ENCODE measurements at regions of chr10 and their contacts with region 1.

Region 1: DNA sequence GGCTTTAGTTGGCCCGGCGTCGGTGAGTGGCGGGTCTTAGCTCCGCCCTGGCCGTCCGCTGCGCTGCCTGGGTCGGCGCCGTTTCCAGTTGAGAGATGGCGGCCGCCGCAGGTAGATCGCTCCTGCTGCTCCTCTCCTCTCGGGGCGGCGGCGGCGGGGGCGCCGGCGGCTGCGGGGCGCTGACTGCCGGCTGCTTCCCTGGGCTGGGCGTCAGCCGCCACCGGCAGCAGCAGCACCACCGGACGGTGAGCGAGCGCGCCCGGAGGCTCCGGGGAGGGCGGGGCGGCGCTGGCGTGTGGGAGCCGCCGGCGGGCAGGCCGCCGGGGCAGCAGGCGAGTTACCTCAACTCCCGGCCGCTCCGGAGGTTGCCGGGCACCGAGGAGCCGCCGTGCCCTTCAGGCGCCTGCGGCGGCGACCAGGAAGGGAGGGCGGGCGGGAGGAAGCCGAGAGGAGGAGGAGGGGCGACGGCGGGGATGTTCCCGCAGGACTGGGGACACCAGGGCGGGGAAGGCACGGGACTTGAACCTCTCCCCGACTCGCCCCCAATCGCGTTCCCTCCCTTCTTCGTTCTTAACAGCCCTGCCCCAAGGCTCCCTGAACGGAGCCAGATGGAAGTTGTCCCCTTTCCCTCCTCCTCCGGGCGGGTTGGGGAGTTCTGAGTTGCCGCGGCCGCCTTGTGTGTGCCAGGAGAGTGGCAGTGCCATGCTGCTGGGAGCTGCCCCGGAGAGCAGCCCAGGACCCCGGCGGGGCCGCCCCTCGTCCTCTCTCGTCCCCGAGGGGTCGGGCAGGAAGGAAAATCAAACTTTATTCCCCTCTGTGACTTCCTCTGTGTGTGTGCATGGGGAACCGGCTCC is at the start of gene MCU:
- DNase-seq: peak; percentile 93 to 96
- ATAC-seq: peak; percentile 97 to 99 (median 98)
- H3K4me3 ChIP-seq: peak within 1 kb of the TSS; percentile 43 to 91 (median 84)
- H3K27ac ChIP-seq: peak within 1 kb of the TSS; percentile 83 to 99 (median 94)
- H3K4me1 ChIP-seq: peaks cover 0 to 39% (median 27%) of the 10 kb centered on the region in 9 donors
- H3K27me3 ChIP-seq: no peaks in the 10 kb centered on the region
- CTCF ChIP-seq: no peak
- total RNA-seq, gene MCU: 12.0 to 19.0 (median 15.2) TPM

Region 2: GRCh38 chr10:72625608-72626443 is 66.5 kb before region 1 on chr10 and contains the start of gene MICU1:
- intact Hi-C with region 1: loop called in 3 of 10 experiments (anchors 2 to 5 kb)
- DNase-seq: peak; percentile 92 to 97
- ATAC-seq: peak; percentile 100
- H3K4me3 ChIP-seq: peak within 1 kb of the TSS; percentile 66 to 95 (median 81)
- H3K27ac ChIP-seq: peak within 1 kb of the TSS; percentile 36 to 88 (median 84)
- H3K4me1 ChIP-seq: peaks cover 2 to 20% (median 11%) of the 10 kb centered on the region in 9 donors
- H3K27me3 ChIP-seq: no peaks in the 10 kb centered on the region
- CTCF ChIP-seq: no peak
- total RNA-seq, gene MICU1: 41.3 to 54.1 (median 45.9) TPM

Region 3: DNA sequence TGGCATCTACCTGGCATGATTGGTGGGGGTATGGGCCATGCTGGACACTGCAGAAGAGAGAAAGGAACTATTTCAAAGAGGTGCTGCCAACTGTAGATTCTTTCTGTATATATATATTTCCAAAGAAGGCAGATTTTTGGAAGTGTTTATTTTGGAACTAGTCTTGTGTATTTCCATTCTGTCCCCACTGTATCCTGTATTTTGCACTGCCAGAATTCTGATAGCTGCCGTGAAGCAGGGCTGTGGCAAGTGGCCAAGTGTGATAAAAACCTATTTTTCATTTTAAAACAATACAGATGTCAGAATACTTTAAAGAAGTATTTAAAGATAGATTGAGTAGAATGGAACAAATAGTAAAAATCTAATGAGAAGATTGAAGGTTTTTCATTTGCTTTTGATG is 16.8 kb after region 1 on chr10:
- intact Hi-C with region 1: no loop called
- DNase-seq: peak in 1 of 2 donors; percentile 60
- ATAC-seq: peak in 6 of 8 donors; percentile 43 to 73 (median 54)
- H3K4me3 ChIP-seq: no peak overlapping the region
- H3K27ac ChIP-seq: peak overlapping the region in 6 of 10 donors; percentile 10 to 77 (median 38)
- H3K4me1 ChIP-seq: peaks cover 0 to 53% (median 32%) of the 10 kb centered on the region in 9 donors
- H3K27me3 ChIP-seq: no peaks in the 10 kb centered on the region
- CTCF ChIP-seq: no peak

Region 4: GRCh38 chr10:72736176-72736827 is 44.0 kb after region 1 on chr10:
- intact Hi-C with region 1: loop called in 1 of 10 experiments (anchors 5 kb)
- DNase-seq: peak in 1 of 2 donors; percentile 16
- ATAC-seq: peak in 7 of 8 donors; percentile 13 to 59 (median 49)
- H3K4me3 ChIP-seq: no peak overlapping the region
- H3K27ac ChIP-seq: peak overlapping the region in 9 of 10 donors; percentile 34 to 83 (median 54)
- H3K4me1 ChIP-seq: peaks cover 3 to 68% (median 53%) of the 10 kb centered on the region in 9 donors
- H3K27me3 ChIP-seq: no peaks in the 10 kb centered on the region
- CTCF ChIP-seq: no peak

Measured in heart right ventricle (tissue), 16 donors.